Body of pancreas (tissue), 4 donors: ENCODE measurements at regions of chr11 and their contacts with region 1.

Region 1: GRCh38 chr11:1515082-1516060 is 28.8 kb upstream of the MOB2 start:
- DNase-seq: peak; percentile 79 to 87 (median 85)
- ATAC-seq: peak; percentile 88
- H3K4me3 ChIP-seq: no peak overlapping the region
- H3K27ac ChIP-seq: no peak overlapping the region
- H3K4me1 ChIP-seq: peaks cover 15% of the 10 kb centered on the region
- H3K27me3 ChIP-seq: no peaks in the 10 kb centered on the region
- CTCF ChIP-seq: peak; percentile 91 to 96 (median 94)
- POLR2A ChIP-seq: no peak

Region 2: DNA sequence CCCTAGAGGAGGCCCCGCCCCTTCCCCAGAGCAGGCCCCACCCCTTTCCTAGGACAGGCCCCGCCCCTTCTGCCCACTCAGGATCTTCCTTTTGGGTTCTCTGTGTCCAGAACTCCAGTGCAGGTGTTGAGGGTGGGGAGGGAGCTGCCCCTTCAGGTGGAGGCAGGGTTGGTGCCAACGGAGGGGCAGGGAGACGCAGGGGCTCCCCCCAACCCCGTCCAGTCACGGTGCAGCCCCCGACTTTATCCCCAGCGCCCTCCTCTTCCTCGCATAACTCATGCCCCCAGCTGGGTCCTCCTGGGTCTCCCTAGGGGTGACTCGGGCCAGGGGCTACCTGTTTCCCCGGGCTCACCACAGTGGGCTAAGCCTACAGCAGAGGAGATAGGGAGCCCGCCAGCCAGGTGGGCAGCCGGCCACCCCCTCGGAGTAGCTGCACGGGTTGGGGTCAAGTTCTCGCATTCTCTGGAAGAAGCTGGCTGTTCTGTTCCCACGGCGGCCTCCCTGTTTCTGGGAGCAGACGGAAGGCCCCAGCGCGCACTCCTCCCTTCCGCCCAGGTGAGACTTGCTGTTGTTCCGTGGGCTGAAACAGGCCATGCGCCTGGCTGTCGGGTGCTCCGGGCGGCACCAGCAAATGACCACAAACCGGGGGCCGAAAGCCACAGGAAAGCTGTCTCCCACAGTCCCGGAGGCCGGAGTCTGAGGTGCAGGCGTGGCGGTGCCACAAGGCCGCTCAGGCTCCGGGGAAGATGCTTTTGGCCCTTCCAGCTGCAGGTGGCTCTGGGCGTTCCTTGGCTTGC is 401.8 kb before region 1 on chr11:
- intact Hi-C with region 1: loop called (anchors 10 kb)
- DNase-seq: peak in 2 of 4 donors; percentile 3 to 8
- ATAC-seq: no peak
- H3K4me3 ChIP-seq: no peak overlapping the region
- H3K27ac ChIP-seq: no peak overlapping the region
- H3K4me1 ChIP-seq: no peaks in the 10 kb centered on the region
- H3K27me3 ChIP-seq: peaks cover 0 to 5% of the 10 kb centered on the region in 2 donors
- CTCF ChIP-seq: no peak
- POLR2A ChIP-seq: no peak

Region 3: DNA sequence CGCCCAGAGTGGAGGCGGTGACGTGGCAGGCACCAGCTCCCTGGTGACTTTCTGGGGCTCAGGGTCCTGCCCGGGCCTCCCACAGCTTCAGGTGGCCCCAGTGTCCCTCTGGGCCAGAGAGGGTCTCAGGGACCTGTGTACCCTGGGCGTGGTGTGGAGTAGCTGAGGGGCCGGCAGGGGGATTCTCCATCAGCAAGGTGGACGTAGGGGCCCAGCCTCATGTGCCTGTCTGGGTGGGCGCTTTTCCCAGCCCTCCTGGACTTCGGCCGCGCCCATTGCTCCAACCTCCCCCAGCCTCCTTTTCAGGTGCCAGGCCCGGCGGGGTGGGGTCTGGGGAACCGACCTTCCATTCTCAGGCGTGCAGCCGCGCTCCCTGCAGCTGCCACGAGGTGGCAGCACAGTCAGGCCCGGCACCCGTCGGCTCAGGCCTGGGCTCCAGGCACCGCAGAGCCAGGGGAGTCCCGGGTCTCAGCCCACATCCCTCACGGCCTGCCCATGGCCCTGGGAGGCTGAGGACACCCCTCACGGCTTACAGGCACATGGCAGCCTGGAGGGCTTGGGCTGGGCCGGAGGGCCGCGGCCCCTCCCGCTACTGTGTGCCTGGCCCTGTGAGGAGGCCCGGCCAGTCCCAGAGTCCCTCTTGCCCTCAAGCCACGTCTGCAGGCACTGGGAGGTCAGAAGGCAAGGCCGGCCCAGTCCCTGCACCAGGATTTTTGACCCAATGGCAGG is 312.4 kb before region 1 on chr11:
- intact Hi-C with region 1: loop called (anchors 2 kb)
- DNase-seq: peak; percentile 53 to 75 (median 67)
- ATAC-seq: peak; percentile 80
- H3K4me3 ChIP-seq: no peak overlapping the region
- H3K27ac ChIP-seq: no peak overlapping the region
- H3K4me1 ChIP-seq: peaks cover 6% of the 10 kb centered on the region
- H3K27me3 ChIP-seq: peaks cover 0 to 24% of the 10 kb centered on the region in 2 donors
- CTCF ChIP-seq: peak; percentile 79 to 94 (median 87)
- POLR2A ChIP-seq: no peak

Region 4: DNA sequence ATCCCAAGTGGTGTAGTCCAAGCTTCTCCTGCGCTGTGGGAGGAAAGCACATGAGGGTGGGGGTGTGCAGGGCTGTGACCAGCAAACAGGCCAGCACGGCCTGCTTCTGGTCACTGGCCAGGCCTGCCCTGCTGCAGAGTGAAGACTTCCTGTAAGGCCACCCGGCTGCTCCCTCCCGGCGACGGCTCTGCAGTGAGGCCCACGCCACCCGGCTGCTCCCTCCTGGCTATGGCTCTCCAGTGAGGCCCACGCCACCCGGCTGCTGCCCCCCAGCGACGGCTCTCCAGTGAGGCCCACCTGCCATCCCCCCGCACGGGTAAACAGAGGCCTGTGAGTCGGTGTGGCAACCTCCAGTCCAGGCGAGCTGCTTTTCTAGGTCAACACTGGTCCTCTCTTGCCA is 157.1 kb before region 1 on chr11:
- intact Hi-C with region 1: no loop called
- DNase-seq: no peak
- ATAC-seq: no peak
- H3K4me3 ChIP-seq: no peak overlapping the region
- H3K27ac ChIP-seq: no peak overlapping the region
- H3K4me1 ChIP-seq: peaks cover 12% of the 10 kb centered on the region
- H3K27me3 ChIP-seq: peaks cover 0 to 4% of the 10 kb centered on the region in 2 donors
- CTCF ChIP-seq: no peak
- POLR2A ChIP-seq: no peak